CD14-positive monocyte (primary cell): ENCODE measurements at regions of chr13 and their contacts with region 1.

Region 1: GRCh38 chr13:26179344-26179743 is 42.8 kb downstream of the RNF6 start:
- DNase-seq: no peak
- H3K4me3 ChIP-seq: no peak overlapping the region
- H3K4me3 Mint-ChIP-seq: no peak overlapping the region
- H3K27ac ChIP-seq: no peak overlapping the region
- H3K27ac Mint-ChIP-seq: no peak overlapping the region
- H3K4me1 ChIP-seq: no peaks in the 10 kb centered on the region
- H3K4me1 Mint-ChIP-seq: peaks cover 2% of the 10 kb centered on the region
- H3K27me3 ChIP-seq: no peaks in the 10 kb centered on the region
- H3K27me3 Mint-ChIP-seq: peaks cover 0 to 7% (median 2%) of the 10 kb centered on the region in 3 donors
- CTCF ChIP-seq: no peak

Region 2: GRCh38 chr13:25847145-25847544 is 332.2 kb before region 1 on chr13:
- intact Hi-C with region 1: no loop called
- DNase-seq: peak; percentile 11 to 27 (median 22)
- H3K4me3 ChIP-seq: peak overlapping the region in 1 of 3 experiments; percentile 58
- H3K4me3 Mint-ChIP-seq: peak overlapping the region; percentile 48 to 69
- H3K27ac ChIP-seq: peak overlapping the region; percentile 38 to 70
- H3K27ac Mint-ChIP-seq: peak overlapping the region; percentile 79 to 90 (median 86)
- H3K4me1 ChIP-seq: peaks cover 49 to 58% of the 10 kb centered on the region in 2 donors
- H3K4me1 Mint-ChIP-seq: peaks cover 60% of the 10 kb centered on the region
- H3K27me3 ChIP-seq: no peaks in the 10 kb centered on the region
- H3K27me3 Mint-ChIP-seq: peaks cover 3 to 7% (median 6%) of the 10 kb centered on the region in 3 donors
- CTCF ChIP-seq: no peak

Region 3: DNA sequence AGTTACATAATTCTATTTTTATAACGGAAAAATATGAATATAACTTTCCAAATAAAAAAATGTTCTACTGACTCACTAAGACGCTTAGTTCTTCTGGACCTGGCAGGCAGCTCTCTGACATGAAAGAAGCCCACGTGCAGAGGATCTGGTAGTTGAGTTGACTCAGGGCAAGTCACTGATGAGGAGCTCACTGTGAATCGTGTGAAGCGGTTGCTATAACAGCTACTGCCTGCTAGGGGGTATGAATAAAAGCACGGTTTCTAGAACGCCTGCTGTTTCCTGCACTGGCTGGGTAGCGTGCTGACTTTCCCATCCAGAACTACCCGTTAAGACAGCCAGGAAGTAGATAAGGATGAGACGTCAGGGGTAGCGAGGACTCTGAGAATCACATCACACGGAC is 323.5 kb after region 1 on chr13:
- intact Hi-C with region 1: loop called (anchors 5 to 10 kb)
- DNase-seq: no peak
- H3K4me3 ChIP-seq: no peak overlapping the region
- H3K4me3 Mint-ChIP-seq: no peak overlapping the region
- H3K27ac ChIP-seq: no peak overlapping the region
- H3K27ac Mint-ChIP-seq: no peak overlapping the region
- H3K4me1 ChIP-seq: no peaks in the 10 kb centered on the region
- H3K4me1 Mint-ChIP-seq: no peaks in the 10 kb centered on the region
- H3K27me3 ChIP-seq: no peaks in the 10 kb centered on the region
- H3K27me3 Mint-ChIP-seq: peaks cover 2 to 11% (median 10%) of the 10 kb centered on the region in 3 donors
- CTCF ChIP-seq: no peak

Region 4: DNA sequence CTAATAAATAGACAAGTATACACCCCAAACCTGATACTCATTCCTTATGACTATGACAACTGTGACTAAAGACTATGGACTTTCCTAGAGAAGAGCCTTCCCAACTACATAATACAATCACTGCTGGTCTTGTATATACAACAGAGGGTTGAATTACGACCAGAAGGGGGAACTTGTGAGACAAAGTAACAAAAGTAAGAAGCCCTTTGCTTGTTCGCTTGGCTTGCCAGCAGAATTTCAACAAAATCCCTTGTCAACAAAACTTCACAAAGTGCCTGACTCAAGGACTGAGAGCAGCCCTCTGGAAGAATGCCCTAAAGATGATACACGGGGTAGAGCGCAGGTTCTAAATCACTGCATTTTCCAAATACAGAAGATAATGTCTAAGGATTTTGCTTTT is 477.6 kb after region 1 on chr13:
- intact Hi-C with region 1: no loop called
- DNase-seq: no peak
- H3K4me3 ChIP-seq: no peak overlapping the region
- H3K4me3 Mint-ChIP-seq: no peak overlapping the region
- H3K27ac ChIP-seq: no peak overlapping the region
- H3K27ac Mint-ChIP-seq: no peak overlapping the region
- H3K4me1 ChIP-seq: no peaks in the 10 kb centered on the region
- H3K4me1 Mint-ChIP-seq: no peaks in the 10 kb centered on the region
- H3K27me3 ChIP-seq: no peaks in the 10 kb centered on the region
- H3K27me3 Mint-ChIP-seq: no peaks in the 10 kb centered on the region
- CTCF ChIP-seq: no peak